ENCODE measurements at regions of chr10 and their contacts with region 1.

Region 1: GRCh38 chr10:74244097-74244685 is 93.2 kb downstream of the ADK start:
- DNase-seq: peak; percentile 71
- H3K4me3 ChIP-seq: no peak overlapping the region
- H3K27ac ChIP-seq: no peak overlapping the region
- H3K4me1 ChIP-seq: peaks cover 10% of the 10 kb centered on the region
- H3K27me3 ChIP-seq: no peaks in the 10 kb centered on the region
- CTCF ChIP-seq: peak; percentile 68

Region 2: DNA sequence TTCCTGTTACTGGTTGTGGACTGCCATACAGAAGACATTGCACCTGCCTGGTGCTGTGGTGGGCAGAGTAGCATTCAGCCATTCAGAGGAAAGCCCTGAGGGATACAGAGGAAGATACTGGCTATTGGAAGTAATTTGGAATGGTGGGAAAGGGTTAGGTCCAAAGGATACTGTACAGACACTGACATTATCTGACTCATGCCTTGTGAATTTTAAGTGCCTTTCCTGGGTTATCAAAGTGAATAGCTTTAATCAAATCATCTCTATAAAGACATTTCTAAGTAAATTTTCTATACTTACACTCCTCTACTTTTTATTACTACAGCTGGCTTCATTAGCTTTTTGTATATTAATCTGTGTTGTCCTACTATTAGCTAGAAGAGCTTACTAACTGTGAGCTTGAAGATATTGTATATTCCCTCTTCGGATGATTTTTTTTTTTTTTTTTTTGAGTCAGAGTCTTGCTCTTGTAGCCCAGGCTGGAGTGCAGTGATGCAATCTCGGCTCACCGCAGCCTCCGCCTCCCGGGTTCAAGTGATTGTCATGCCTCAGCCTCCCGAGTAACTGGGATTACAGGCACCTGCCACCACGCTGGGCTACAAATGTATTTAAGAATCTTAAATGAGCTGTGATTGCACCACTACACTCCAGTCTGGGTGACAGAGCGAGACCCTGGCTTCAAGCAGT is 93.3 kb after region 1 on chr10:
- CTCF ChIA-PET with region 1: no interaction called
- POLR2A ChIA-PET with region 1: interaction called, 11 read pairs
- intact Hi-C with region 1: no loop called
- DNase-seq: peak; percentile 22
- H3K4me3 ChIP-seq: no peak overlapping the region
- H3K27ac ChIP-seq: no peak overlapping the region
- H3K4me1 ChIP-seq: peaks cover 9% of the 10 kb centered on the region
- H3K27me3 ChIP-seq: no peaks in the 10 kb centered on the region
- CTCF ChIP-seq: no peak

Measured in A673 (cell line).